PC-3 (cell line): ENCODE measurements at regions of chr2 and their contacts with region 1.

Region 1: GRCh38 chr2:171762879-171763573 is 75.8 kb downstream of the DYNC1I2 start:
- DNase-seq: peak; percentile 63
- ATAC-seq: peak; percentile 67
- H3K4me3 ChIP-seq: peak overlapping the region; percentile 15; the same call in 1 of the 2 replicates
- H3K27ac ChIP-seq: peak overlapping the region; percentile 94
- H3K4me1 ChIP-seq: peaks cover 24% of the 10 kb centered on the region
- H3K27me3 ChIP-seq: no peaks in the 10 kb centered on the region
- CTCF ChIP-seq: no peak

Region 2: DNA sequence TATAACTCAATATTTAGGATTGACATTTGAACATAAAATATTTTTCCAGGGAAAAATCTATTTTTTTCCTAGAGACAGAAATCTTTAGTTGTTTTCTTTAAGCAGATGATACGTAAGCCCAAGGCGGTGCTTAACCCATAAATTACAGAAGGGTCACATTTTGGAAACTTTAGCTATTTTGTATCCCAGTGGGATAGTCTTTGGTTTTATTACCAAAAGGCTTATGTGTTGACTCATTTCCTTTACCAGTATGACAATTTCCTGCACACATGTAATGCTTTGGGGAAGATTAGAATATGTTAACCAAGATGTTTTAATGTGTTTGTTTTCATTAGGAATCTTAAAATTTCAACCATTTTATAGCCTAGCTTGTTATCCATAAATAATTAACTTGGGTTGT is 51.0 kb before region 1 on chr2:
- CTCF ChIA-PET with region 1: no interaction called
- POLR2A ChIA-PET with region 1: no interaction called
- intact Hi-C with region 1: loop called (anchors 5 kb)
- DNase-seq: peak; percentile 74
- ATAC-seq: peak; percentile 81
- H3K4me3 ChIP-seq: no peak overlapping the region
- H3K27ac ChIP-seq: peak overlapping the region; percentile 50
- H3K4me1 ChIP-seq: peaks cover 42% of the 10 kb centered on the region
- H3K27me3 ChIP-seq: no peaks in the 10 kb centered on the region
- CTCF ChIP-seq: no peak

Region 3: DNA sequence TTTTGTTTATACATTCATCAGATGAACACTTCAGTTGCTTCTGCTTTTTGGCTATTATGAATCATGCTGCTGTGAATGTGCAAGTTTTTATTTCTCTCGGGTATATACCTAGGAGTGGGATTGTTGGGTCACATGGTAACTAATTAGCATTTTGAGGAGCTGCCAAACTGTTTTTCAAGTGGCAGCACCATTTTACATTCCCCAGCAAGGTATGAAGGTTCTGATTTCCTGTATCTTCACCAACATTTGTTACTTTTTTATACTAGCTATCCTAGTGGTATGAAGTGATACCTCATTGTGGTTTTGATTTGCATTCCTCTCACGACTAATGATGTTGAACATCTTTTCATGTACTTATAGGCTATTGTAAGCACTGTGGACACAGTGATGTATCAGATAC is 21.8 kb before region 1 on chr2:
- CTCF ChIA-PET with region 1: no interaction called
- POLR2A ChIA-PET with region 1: no interaction called
- intact Hi-C with region 1: no loop called
- DNase-seq: peak; percentile 16
- ATAC-seq: no peak
- H3K4me3 ChIP-seq: no peak overlapping the region
- H3K27ac ChIP-seq: no peak overlapping the region
- H3K4me1 ChIP-seq: no peaks in the 10 kb centered on the region
- H3K27me3 ChIP-seq: no peaks in the 10 kb centered on the region
- CTCF ChIP-seq: no peak